Gastrocnemius medialis (tissue), 4 donors: ENCODE measurements at regions of chr10 and their contacts with region 1.

Region 1: DNA sequence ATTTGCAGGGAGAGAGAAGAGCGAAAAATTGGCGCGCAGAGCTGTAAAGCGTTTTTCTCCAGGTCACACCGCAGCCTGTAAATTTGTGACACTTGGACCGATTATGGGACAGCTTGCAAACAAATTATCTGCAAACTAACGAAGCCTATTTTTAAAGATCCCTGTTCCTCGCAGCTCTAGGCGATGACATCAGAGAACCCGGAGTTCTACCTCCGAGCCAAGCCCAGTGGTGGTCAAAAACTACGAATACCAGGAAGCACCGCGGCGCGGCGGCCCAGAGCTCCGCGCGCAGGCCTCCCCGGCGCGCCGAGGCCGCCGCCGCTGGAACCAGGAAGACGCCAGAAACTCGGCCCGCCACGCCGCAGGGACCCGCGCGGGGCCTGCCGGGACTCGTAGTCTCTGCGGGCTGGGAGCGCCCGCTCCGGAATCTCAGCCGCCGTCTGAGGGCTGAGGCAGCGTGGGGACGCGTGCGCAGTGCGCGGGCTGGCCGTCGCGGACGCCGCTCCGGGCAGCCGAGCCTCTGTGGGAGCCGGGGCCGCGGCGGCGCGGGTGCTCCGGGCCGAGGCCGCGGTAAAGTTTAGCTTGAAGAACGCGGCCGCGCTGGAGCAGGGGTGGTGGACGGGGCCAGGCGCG is at the start of gene PLEKHA1:
- DNase-seq: peak; percentile 91 to 94
- ATAC-seq: peak; percentile 90 to 92
- H3K4me3 ChIP-seq: peak within 1 kb of the TSS; percentile 64 to 96 (median 70)
- H3K27ac ChIP-seq: peak within 1 kb of the TSS; percentile 82 to 99 (median 92)
- H3K4me1 ChIP-seq: peaks cover 31 to 37% of the 10 kb centered on the region in 2 donors
- H3K27me3 ChIP-seq: no peaks in the 10 kb centered on the region
- CTCF ChIP-seq: no peak
- POLR2A ChIP-seq: peak; percentile 95 to 96
- total RNA-seq, gene PLEKHA1: 33.7 to 54.0 (median 37.8) TPM

Region 2: DNA sequence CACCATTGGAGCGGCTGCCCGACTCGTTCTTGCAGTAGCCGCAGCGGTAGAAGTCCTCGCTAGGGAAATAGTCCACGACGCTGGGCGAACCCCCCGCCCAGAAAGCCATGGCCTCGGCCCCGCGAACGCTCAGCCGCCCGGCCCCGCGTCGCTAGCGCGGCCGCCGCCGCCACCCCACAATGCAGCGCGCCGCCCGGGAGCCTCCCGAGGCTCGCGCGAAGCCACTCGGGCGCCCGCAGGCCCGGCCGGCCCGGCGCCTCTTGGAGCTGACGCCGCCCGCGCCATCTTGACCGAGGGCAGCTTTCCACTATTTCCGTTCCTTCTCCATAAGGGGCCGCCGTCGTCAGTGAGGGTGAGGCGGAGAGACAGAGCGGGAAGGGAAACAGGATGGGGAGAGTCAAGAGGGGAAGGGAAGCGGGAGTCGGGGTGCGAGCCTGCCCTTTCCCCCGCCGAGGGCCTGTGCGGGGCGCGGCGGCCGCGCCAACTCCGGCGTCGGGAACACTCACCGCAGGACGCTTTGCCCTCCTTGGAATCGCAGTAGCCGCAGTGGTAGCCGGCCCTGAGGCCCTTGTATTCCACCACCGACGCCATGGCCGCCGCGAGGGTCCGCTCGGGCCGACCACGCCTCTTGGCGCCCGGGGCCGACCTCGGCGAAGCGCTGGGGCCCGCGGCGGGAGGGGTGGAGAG is 446.4 kb before region 1 on chr10 and contains the start of gene ATE1:
- in situ Hi-C with region 1: no loop called
- intact Hi-C with region 1: loop called (anchors 5 kb)
- DNase-seq: peak; percentile 87 to 90
- ATAC-seq: peak; percentile 90
- H3K4me3 ChIP-seq: peak within 1 kb of the TSS; percentile 77 to 99 (median 86)
- H3K27ac ChIP-seq: peak within 1 kb of the TSS; percentile 90 to 99 (median 94)
- H3K4me1 ChIP-seq: peaks cover 18 to 21% of the 10 kb centered on the region in 2 donors
- H3K27me3 ChIP-seq: no peaks in the 10 kb centered on the region
- CTCF ChIP-seq: peak in 3 of 5 experiments; percentile 3 to 11 (median 6)
- POLR2A ChIP-seq: peak; percentile 69 to 84
- total RNA-seq, gene ATE1: 34.3 to 57.6 (median 39.4) TPM

Region 3: DNA sequence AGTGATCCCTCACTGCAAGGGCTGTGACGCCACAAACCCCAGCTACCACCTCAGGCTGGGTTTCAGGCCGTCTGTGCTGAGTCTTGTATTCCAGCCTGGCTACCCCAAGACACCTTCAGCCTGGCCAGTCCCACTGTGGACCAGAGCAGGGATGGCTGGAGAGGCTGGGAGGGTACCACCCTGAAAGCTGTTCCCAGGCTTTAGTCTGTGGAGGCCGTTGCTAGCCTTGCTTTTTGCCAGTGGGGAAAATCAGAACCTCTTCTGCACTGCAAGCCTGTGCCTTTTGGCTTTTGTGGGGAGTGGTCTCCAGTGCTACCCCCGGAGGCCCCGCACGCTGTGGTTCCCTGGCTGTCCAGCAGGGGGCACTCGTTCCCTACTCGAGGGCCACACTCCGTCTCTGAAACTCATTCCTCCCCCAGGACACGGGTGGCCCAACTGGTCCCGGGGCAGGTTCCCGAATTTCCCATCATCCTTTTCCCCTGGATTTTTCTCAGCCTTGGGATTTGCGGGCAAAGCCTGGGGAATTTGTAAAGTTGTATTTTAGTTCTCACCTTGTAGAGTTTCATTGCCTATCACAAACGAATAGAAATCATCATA is 231.6 kb before region 1 on chr10:
- in situ Hi-C with region 1: no loop called
- intact Hi-C with region 1: loop called (anchors 10 kb)
- DNase-seq: peak in 1 of 2 donors; percentile 56
- ATAC-seq: no peak
- H3K4me3 ChIP-seq: no peak overlapping the region
- H3K27ac ChIP-seq: peak overlapping the region; percentile 85 to 98 (median 94)
- H3K4me1 ChIP-seq: peaks cover 64 to 72% of the 10 kb centered on the region in 2 donors
- H3K27me3 ChIP-seq: no peaks in the 10 kb centered on the region
- CTCF ChIP-seq: peak; percentile 93 to 98 (median 98)
- POLR2A ChIP-seq: no peak

Region 4: GRCh38 chr10:122323941-122324675 is 50.2 kb before region 1 on chr10:
- in situ Hi-C with region 1: no loop called
- intact Hi-C with region 1: no loop called
- DNase-seq: peak in 1 of 2 donors; percentile 30
- ATAC-seq: peak; percentile 71 to 85
- H3K4me3 ChIP-seq: no peak overlapping the region
- H3K27ac ChIP-seq: no peak overlapping the region
- H3K4me1 ChIP-seq: no peaks in the 10 kb centered on the region
- H3K27me3 ChIP-seq: no peaks in the 10 kb centered on the region
- CTCF ChIP-seq: no peak
- POLR2A ChIP-seq: no peak

Region 5: DNA sequence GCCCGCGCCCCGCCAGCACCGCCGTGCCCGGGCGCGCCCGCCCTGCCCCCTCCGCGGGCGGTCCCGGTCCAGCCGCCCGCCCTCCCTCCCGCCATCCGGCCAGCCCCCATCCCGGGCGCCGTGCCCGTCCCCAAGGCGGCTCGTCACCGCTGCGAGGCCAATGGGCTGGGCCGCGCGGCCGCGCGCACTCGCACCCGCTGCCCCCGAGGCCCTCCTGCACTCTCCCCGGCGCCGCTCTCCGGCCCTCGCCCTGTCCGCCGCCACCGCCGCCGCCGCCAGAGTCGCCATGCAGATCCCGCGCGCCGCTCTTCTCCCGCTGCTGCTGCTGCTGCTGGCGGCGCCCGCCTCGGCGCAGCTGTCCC is 87.0 kb after region 1 on chr10 and contains the start of gene HTRA1:
- in situ Hi-C with region 1: no loop called
- intact Hi-C with region 1: loop called (anchors 5 kb)
- DNase-seq: peak; percentile 38 to 41
- ATAC-seq: peak; percentile 22 to 48
- H3K4me3 ChIP-seq: peak within 1 kb of the TSS; percentile 68 to 79 (median 72)
- H3K27ac ChIP-seq: peak within 1 kb of the TSS; percentile 69 to 73 (median 70)
- H3K4me1 ChIP-seq: peaks cover 21 to 28% of the 10 kb centered on the region in 2 donors
- H3K27me3 ChIP-seq: no peaks in the 10 kb centered on the region
- CTCF ChIP-seq: no peak
- POLR2A ChIP-seq: peak; percentile 42 to 44
- total RNA-seq, gene HTRA1: 14.2 to 23.2 (median 17.2) TPM